AG04450 (cell line): ENCODE measurements at regions of chr5 and their contacts with region 1.

Region 1: GRCh38 chr5:157743163-157744050 is at the start of gene LSM11:
- DNase-seq: no peak
- H3K4me3 ChIP-seq: peak within 1 kb of the TSS; percentile 76
- H3K27ac ChIP-seq: no peak within 1 kb of the TSS
- H3K27me3 ChIP-seq: no peaks in the 10 kb centered on the region
- CTCF ChIP-seq: peak; percentile 98
- polyA plus RNA-seq, gene LSM11: 1.8 and 2.5 TPM in 2 replicates

Region 2: GRCh38 chr5:157328277-157328912 is 415.0 kb before region 1 on chr5:
- CTCF ChIA-PET with region 1: interaction called, 88 read pairs
- POLR2A ChIA-PET with region 1: no interaction called
- DNase-seq: peak; percentile 70
- H3K4me3 ChIP-seq: peak overlapping the region; percentile 33
- H3K27ac ChIP-seq: no peak overlapping the region
- H3K27me3 ChIP-seq: no peaks in the 10 kb centered on the region
- CTCF ChIP-seq: peak; percentile 99

Region 3: GRCh38 chr5:157342822-157343402 is 400.5 kb before region 1 on chr5:
- CTCF ChIA-PET with region 1: interaction called, 16 read pairs
- POLR2A ChIA-PET with region 1: no interaction called
- DNase-seq: no peak
- H3K4me3 ChIP-seq: no peak overlapping the region
- H3K27ac ChIP-seq: no peak overlapping the region
- H3K27me3 ChIP-seq: no peaks in the 10 kb centered on the region
- CTCF ChIP-seq: peak; percentile 48

Region 4: GRCh38 chr5:157366741-157367674 is 376.4 kb before region 1 on chr5:
- CTCF ChIA-PET with region 1: interaction called, 20 read pairs
- POLR2A ChIA-PET with region 1: no interaction called
- DNase-seq: peak; percentile 54
- H3K4me3 ChIP-seq: no peak overlapping the region
- H3K27ac ChIP-seq: no peak overlapping the region
- H3K27me3 ChIP-seq: no peaks in the 10 kb centered on the region
- CTCF ChIP-seq: peak; percentile 82

Region 5: DNA sequence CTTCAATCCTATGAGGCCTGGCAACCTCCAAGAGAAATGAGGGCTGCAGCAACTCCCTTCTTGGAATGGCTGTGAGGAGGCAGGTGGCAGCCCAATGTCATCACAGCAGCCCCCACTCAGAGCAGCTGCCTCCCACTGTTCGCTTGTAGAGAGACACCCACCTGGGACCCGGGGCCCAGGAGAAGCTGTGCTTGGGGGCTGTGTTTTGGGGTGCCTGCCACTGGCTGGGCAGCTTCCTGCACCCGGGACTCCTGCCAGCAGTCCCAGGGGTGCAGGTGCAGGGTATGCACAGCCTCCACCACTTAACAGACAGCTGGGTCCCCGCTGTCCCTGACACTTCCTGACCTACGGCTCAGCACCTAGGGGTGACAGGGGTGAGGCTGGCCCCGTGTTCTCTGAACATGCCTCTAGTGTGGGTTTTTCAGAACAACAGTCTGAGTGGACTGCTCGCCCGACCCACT is 257.2 kb before region 1 on chr5:
- CTCF ChIA-PET with region 1: interaction called, 11 read pairs
- POLR2A ChIA-PET with region 1: no interaction called
- DNase-seq: no peak
- H3K4me3 ChIP-seq: no peak overlapping the region
- H3K27ac ChIP-seq: no peak overlapping the region
- H3K27me3 ChIP-seq: no peaks in the 10 kb centered on the region
- CTCF ChIP-seq: no peak

Region 6: GRCh38 chr5:157718519-157718918 is 24.9 kb before region 1 on chr5:
- CTCF ChIA-PET with region 1: interaction called, 53 read pairs
- POLR2A ChIA-PET with region 1: no interaction called
- DNase-seq: no peak
- H3K4me3 ChIP-seq: no peak overlapping the region
- H3K27ac ChIP-seq: no peak overlapping the region
- H3K27me3 ChIP-seq: no peaks in the 10 kb centered on the region
- CTCF ChIP-seq: peak; percentile 69

Region 7: DNA sequence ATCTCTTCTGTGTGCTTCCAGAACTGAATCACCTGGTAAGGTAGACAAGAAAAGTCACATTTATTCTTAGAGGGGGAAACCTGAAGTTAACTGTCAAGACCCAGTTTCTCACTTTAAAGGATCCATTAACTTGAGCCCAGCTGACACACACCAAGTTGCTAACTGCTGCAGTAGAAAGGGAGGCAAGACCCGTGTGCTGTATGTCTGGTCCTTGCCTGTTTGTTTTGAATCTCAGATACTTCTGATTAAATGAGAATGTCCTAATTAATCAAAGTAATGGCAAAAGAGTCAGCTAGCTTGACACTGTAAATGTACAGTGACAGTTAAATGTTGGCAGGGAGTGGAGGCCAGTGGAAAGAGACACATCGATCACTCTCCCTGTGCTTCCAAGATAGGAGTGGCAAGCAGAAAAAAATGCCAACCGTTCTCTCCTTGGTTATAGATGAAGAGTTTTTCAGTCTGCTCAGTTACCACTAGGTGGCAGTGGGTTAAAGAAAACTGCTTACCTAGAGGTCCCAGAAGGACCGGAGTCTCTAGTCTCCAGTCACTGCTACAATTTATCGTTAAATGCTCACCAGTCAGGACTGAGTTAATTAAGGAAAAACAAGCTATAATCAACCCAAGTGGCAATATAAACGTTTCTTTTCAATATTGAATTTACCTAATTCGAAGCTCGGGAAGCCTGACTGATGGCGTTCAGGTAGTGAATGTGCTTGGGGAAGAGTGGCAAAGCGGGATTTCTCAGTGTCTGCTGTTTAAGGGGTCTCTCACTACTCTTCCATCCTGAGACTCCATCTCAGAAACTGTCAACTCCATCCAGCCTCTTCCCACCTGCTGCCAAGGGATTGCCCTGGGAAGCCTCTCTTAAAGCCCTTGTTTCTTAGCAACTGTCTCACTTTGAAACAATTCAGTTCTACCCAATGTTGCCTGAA is 18.5 kb after region 1 on chr5:
- CTCF ChIA-PET with region 1: interaction called, 27 read pairs
- POLR2A ChIA-PET with region 1: no interaction called
- DNase-seq: no peak
- H3K4me3 ChIP-seq: no peak overlapping the region
- H3K27ac ChIP-seq: no peak overlapping the region
- H3K27me3 ChIP-seq: no peaks in the 10 kb centered on the region
- CTCF ChIP-seq: peak; percentile 82

Region 8: GRCh38 chr5:157842787-157843186 is 99.4 kb after region 1 on chr5:
- CTCF ChIA-PET with region 1: no interaction called
- POLR2A ChIA-PET with region 1: no interaction called
- DNase-seq: no peak
- H3K4me3 ChIP-seq: no peak overlapping the region
- H3K27ac ChIP-seq: no peak overlapping the region
- H3K27me3 ChIP-seq: no peaks in the 10 kb centered on the region
- CTCF ChIP-seq: no peak

Region 9: DNA sequence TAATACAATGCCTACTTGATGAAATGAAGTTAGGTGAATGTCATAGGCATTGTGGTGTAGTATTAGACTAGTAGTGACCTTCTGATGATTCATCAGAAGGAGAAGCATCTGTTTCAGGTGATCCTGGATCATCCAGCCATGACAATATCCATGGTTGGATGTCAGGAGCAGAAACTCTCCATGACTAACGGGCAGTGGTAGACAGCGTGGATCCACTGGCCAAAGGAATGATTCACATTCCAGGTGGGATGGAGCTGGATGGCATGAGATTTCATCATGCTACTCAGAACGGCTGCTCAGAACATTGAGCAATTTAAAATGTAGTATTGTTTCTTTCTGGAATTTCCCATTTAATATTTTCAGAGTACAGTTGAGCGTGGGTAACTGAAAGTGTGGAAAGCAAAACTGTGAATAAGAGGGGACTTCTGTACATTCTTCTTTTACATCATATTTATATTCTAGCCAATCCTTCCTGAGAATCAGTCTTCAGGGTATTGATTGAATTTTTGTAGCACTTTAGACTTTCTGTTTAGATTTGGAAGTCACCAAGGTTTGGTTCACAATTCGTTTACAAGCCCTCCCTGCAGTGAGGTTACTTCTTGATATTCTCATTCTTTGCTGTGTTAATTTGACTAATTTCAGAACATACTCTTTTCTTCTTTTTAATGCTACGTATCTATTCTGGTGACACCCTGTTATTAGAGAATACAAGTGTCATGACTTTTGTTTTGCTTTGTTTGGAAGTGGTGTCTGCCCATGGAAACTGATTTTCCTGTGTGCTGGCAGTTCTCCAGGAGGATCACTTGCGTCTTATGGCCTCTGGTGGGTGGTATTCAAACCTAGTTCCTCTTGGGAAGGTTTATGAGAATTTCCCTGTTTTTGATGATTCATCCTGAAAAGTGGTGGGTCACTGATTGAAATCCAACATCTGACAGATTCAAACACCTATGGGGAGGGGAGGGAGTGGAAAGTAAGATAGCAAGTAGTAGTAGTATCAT is 127.7 kb after region 1 on chr5:
- CTCF ChIA-PET with region 1: no interaction called
- POLR2A ChIA-PET with region 1: no interaction called
- DNase-seq: no peak
- H3K4me3 ChIP-seq: no peak overlapping the region
- H3K27ac ChIP-seq: no peak overlapping the region
- H3K27me3 ChIP-seq: no peaks in the 10 kb centered on the region
- CTCF ChIP-seq: 0 out of 2 replicates have a peak, but pooled peaks have one; percentile 14